Activated T-helper 1 cell treated with anti-CD3 and anti-CD28 coated beads, Interleukin-12 subunit alpha, Interleukin-12 subunit beta, Interleukin-2, Interleukin-4 antibody, amounts not matched to agents 30 ng/mL and 10 ng/mL and 1 ng/mL, durations not matched to agents 14 hours and 24 hours and 36 hours (primary cell): ENCODE measurements at regions of chr15 and their contacts with region 1.

Region 1: DNA sequence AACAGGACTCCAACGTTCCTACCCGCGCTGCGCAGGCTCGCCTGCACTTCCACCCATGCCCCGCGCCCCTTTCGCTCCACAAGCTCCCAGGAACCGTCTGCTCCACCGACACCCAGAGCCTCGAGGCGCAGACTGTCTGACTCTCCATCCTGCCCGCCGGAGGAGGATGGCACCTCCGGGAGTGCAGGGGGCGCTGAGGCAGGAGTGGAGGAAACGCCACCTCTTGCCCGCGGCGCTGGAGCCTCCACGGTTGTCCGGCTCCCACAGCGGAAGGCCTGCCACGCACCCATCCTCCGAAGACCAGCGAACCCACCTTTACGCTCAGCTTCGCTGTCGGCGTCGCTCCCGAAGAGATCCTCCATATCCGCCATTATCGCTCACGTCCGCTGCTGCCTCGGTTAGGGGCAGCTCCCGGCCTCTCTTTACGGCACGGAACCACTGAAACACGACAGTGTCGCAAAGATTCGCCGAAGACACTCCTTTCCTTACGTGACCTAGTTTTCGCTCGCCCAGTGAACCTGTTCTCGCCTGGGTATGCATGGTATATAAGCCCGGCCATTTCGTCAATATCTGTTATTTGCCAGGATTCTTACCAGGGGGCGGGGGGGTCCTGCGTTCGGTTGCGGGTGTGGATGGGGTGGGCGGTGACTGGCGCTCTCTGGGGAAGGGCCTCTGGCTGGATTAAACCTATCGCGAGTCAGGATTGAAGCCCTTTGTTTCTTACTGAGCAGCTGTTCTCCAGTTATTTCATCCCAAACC is at the start of gene LEO1:
- DNase-seq: peak; percentile 88
- H3K4me3 Mint-ChIP-seq: peak within 1 kb of the TSS; percentile 98
- H3K27ac Mint-ChIP-seq: peak within 1 kb of the TSS; percentile 92
- H3K4me1 Mint-ChIP-seq: peaks cover 22% of the 10 kb centered on the region
- H3K27me3 Mint-ChIP-seq: peaks cover 1% of the 10 kb centered on the region
- total RNA-seq, gene LEO1: 36.3 and 36.5 TPM in 2 replicates

Region 2: GRCh38 chr15:52018693-52019387 is 47.3 kb after region 1 on chr15 and contains the start of gene MAPK6:
- intact Hi-C with region 1: loop called (anchors 1 kb)
- DNase-seq: peak; percentile 91
- H3K4me3 Mint-ChIP-seq: peak within 1 kb of the TSS; percentile 98
- H3K27ac Mint-ChIP-seq: peak within 1 kb of the TSS; percentile 99
- H3K4me1 Mint-ChIP-seq: peaks cover 46% of the 10 kb centered on the region
- H3K27me3 Mint-ChIP-seq: peaks cover 7% of the 10 kb centered on the region
- total RNA-seq, gene MAPK6: 57.3 and 57.9 TPM in 2 replicates

Region 3: GRCh38 chr15:52124270-52124880 is 152.8 kb after region 1 on chr15:
- intact Hi-C with region 1: no loop called
- DNase-seq: no peak
- H3K4me3 Mint-ChIP-seq: no peak overlapping the region
- H3K27ac Mint-ChIP-seq: no peak overlapping the region
- H3K4me1 Mint-ChIP-seq: peaks cover 4% of the 10 kb centered on the region
- H3K27me3 Mint-ChIP-seq: no peaks in the 10 kb centered on the region

Region 4: GRCh38 chr15:52179278-52180195 is 208.0 kb after region 1 on chr15:
- intact Hi-C with region 1: loop called (anchors 1 kb)
- DNase-seq: peak; percentile 87
- H3K4me3 Mint-ChIP-seq: peak overlapping the region; percentile 90
- H3K27ac Mint-ChIP-seq: peak overlapping the region; percentile 94
- H3K4me1 Mint-ChIP-seq: peaks cover 37% of the 10 kb centered on the region
- H3K27me3 Mint-ChIP-seq: no peaks in the 10 kb centered on the region